Activated CD4-positive, alpha-beta T cell treated with anti-CD3 and anti-CD28 coated beads, Interleukin-2, amount 10 ng/mL, durations not matched to agents 24 days and 14 days (primary cell): ENCODE measurements at regions of chr11 and their contacts with region 1.

Region 1: DNA sequence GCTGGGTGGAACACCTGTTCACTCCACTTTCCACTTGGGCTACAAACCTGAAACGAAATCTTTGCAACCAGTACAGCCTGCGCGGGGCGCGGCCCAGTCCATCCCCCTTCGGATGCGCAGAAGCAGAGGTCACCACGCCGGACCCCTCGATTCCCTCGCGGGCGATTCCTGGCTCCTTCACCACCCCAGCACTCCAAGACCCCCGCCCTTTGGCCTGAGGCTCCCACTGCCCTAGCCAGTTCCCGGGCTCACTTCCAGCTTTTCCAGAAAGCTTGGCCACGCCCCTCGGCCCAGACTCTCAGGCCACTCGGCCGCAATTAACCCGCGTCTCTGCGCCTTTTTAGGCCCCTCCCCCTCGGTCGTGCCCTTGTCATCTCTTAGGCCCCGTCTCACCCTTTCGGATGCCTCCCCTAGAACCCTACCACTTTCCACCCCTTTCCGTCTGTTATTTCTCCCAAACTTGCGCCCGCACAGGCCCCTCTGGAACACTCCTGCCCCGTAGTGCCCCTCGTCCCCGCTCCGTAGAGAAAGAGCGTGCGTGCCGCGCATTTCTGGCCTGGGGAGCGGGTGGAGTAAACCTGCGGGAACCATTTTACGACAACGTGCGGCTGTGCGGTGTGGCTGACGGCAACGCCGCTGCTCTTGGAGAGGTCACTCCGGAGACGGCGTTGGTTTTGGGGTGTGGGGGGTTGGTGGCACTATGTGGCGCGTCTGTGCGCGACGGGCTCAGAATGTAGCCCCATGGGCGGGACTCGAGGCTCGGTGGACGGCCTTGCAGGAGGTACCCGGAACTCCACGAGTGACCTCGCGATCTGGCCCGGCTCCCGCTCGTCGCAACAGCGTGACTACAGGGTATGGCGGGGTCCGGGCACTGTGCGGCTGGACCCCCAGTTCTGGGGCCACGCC is at the start of gene DLAT:
- DNase-seq: peak; percentile 96
- H3K4me3 Mint-ChIP-seq: peak within 1 kb of the TSS; percentile 100
- H3K27ac Mint-ChIP-seq: peak within 1 kb of the TSS; percentile 100
- H3K4me1 Mint-ChIP-seq: peaks cover 16% of the 10 kb centered on the region
- H3K27me3 Mint-ChIP-seq: no peaks in the 10 kb centered on the region
- total RNA-seq, gene DLAT: 59.2 and 61.8 TPM in 2 replicates

Region 2: DNA sequence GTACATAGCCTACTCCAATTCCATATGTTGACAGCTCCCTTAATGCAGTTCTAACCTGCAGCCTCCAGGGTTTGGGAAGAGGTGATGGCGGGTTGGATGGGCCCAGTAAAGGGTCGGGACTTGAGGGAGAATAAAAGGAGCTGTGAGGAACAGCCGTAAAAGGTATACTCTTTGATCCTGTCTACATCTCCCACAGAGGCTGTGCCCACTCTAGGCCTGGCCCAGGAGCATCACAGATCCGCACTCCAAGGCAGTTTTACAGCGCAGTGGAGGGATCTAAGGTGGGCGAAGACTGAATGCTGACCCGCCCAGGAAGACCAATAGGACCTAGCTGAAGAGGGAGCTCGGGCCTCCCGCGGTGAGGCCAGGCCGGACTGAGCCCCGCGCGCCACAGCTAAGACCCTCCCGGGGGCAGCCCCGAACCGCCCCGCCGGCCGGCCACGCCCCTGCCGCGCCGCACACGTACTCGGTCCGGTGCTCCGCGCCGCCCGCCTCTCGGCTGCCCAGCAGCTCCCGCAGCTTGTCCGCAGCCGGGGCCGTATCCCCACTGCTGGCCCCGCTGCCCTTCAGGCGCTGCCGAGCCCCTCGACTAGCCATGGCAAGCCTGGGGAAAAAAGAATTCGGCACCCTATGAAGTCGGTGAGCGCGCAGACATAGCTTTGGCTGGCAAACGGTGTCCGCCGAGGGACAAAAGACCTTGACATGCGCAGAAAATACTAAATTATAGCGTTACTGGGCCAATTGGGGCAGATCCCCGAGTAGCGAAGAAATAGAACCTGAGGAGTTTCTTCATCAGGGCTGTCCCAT is 153.9 kb before region 1 on chr11 and contains the start of gene ALG9:
- intact Hi-C with region 1: loop called (anchors 2 kb)
- DNase-seq: peak; percentile 97
- H3K4me3 Mint-ChIP-seq: peak within 1 kb of the TSS; percentile 96
- H3K27ac Mint-ChIP-seq: peak within 1 kb of the TSS; percentile 90
- H3K4me1 Mint-ChIP-seq: peaks cover 11% of the 10 kb centered on the region
- H3K27me3 Mint-ChIP-seq: no peaks in the 10 kb centered on the region
- total RNA-seq, gene ALG9: 32.6 and 32.9 TPM in 2 replicates

Region 3: GRCh38 chr11:111932611-111932950 is 92.4 kb before region 1 on chr11:
- intact Hi-C with region 1: loop called (anchors 1 kb)
- DNase-seq: no peak
- H3K4me3 Mint-ChIP-seq: peak overlapping the region; percentile 57
- H3K27ac Mint-ChIP-seq: peak overlapping the region; percentile 84
- H3K4me1 Mint-ChIP-seq: peaks cover 30% of the 10 kb centered on the region
- H3K27me3 Mint-ChIP-seq: no peaks in the 10 kb centered on the region

Region 4: DNA sequence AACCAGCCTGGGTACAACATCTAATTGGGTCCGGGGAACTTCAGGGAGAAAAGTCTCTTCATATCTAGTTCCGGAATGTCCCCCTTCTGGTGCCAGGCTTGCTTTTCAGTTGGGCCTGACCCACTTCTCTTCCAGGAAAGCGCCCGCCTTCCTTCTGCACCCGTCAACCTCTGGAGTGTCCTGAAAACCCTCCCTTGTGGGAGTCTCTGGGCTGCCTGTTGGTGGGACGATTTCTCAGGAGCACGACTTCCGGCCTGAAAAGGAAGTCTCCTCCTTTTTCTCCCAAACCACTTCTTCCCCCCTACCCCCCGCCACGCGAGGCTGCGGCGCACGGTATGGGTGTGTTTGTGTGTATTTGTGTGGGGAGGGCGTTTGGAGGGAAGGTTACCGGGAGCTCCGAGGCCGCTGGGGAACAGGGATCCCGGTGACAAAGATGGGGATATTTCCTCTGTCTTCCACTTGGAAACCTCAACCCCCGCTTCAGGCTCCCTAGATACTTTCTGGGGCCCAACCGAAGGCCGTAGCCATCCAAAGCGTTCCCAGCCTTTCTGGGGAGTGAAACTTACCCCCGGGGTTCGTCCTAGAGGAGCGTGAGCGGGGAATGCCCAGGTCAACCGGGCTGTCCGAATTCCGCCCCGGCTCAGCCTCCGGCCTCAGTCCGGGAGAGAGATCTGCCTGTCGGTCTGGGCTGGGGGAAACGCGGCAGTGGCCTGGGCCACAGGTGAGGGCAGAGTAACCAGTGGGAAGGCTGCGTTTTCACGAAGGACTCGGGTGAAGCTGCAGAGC is 49.2 kb after region 1 on chr11 and contains the start of gene NKAPD1:
- intact Hi-C with region 1: loop called (anchors 1 kb)
- DNase-seq: peak; percentile 95
- H3K4me3 Mint-ChIP-seq: peak within 1 kb of the TSS; percentile 95
- H3K27ac Mint-ChIP-seq: peak within 1 kb of the TSS; percentile 96
- H3K4me1 Mint-ChIP-seq: peaks cover 29% of the 10 kb centered on the region
- H3K27me3 Mint-ChIP-seq: peaks cover 4% of the 10 kb centered on the region
- total RNA-seq, gene NKAPD1: 24.4 and 27.0 TPM in 2 replicates

Region 5: GRCh38 chr11:112100462-112100861 is 75.4 kb after region 1 on chr11:
- intact Hi-C with region 1: no loop called
- DNase-seq: no peak
- H3K4me3 Mint-ChIP-seq: no peak overlapping the region
- H3K27ac Mint-ChIP-seq: no peak overlapping the region
- H3K4me1 Mint-ChIP-seq: no peaks in the 10 kb centered on the region
- H3K27me3 Mint-ChIP-seq: no peaks in the 10 kb centered on the region